ENCODE measurements at regions of chr1 and their contacts with region 1.

Region 1: GRCh38 chr1:157496121-157496526 is 56.2 kb downstream of the FCRL5 start:
- DNase-seq: peak; percentile 23
- ATAC-seq: peak; percentile 97
- H3K4me3 ChIP-seq: no peak overlapping the region
- H3K27ac ChIP-seq: no peak overlapping the region
- H3K4me1 ChIP-seq: no peaks in the 10 kb centered on the region
- H3K27me3 ChIP-seq: no peaks in the 10 kb centered on the region
- CTCF ChIP-seq: peak; percentile 67
- POLR2A ChIP-seq: no peak
- RAD21 ChIP-seq: peak; percentile 48

Region 2: DNA sequence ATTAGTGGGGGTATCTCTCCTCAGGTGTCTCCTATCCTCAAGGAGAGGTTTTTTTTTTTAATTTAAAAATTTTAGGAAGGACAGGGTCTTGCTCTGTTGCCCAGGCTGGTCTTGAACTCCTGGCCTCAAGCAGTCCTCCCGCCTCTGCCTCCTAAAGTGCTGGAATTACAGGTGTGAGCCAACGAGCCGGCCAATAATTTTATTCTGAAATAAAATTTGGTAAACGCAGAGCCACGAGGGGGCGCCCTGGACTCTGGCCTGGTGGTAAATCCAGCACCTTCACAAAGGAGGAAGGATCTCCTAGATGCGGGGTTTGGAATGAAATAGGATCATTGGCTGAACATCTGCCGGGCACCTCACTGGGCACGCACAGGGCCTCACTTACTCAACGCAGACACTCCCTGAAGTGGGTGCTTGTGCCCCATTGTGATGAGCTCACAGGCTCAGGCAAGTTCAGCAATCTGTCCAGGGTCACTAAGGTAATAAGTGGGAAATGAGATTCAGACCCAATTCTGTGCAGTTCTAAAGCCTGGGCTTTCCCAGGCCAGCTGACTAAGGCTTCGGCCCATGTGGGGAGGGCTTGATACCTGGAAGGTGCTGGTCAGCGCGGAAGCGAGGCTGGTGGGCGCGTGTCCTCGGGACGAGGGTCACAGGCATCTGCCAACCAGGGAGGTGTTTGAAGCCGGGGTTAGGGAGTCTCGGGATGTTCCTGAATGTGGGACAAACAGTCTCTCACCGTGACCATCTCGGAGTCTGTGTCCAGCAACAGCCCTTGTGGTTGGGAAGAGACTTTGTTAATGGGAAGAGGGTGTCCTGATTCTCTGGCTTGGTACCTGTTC is 325.2 kb before region 1 on chr1:
- CTCF ChIA-PET with region 1: no interaction called
- POLR2A ChIA-PET with region 1: no interaction called
- dilution Hi-C with region 1: no loop called
- in situ Hi-C with region 1: no loop called
- intact Hi-C with region 1: loop called (anchors 5 kb)
- DNase-seq: no peak
- ATAC-seq: peak; percentile 49; the same call in 1 of the 2 replicates
- H3K4me3 ChIP-seq: no peak overlapping the region
- H3K27ac ChIP-seq: no peak overlapping the region
- H3K4me1 ChIP-seq: no peaks in the 10 kb centered on the region
- H3K27me3 ChIP-seq: peaks cover 39% of the 10 kb centered on the region
- CTCF ChIP-seq: peak; percentile 48
- POLR2A ChIP-seq: no peak
- RAD21 ChIP-seq: no peak

Region 3: DNA sequence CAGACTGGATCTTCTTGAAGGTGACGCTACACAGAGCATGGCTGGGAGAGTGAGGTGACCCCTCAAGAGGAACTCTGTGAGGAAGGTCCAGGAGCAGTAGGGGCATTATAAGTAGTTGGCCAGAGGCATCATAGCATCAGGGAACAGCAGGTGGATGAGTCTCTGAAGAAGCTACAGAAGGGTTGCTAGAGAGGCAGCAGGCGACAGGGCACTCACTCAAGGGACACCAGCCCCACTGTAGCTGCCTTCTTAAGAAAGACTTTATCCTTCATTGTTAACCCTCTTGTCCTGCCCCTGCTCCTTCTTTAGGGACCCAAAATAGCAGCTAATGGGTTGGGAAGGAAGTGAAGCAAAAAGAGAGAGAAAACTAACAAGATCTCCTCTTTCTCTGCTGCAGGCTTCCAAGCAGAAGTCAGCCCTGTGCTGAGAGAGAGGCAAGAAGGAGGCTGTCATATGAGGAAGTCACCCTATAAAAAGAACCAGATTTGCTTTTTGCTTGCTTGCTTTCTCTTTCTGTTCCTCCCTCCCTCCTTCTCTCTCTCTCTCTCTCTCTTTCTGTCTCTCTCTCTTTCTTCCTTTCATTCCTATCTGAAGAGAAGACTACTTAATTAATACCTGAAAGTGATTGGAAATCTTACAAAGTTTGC is 353.2 kb after region 1 on chr1:
- CTCF ChIA-PET with region 1: no interaction called
- POLR2A ChIA-PET with region 1: no interaction called
- dilution Hi-C with region 1: no loop called
- in situ Hi-C with region 1: no loop called
- intact Hi-C with region 1: no loop called
- DNase-seq: no peak
- ATAC-seq: no peak
- H3K4me3 ChIP-seq: no peak overlapping the region
- H3K27ac ChIP-seq: no peak overlapping the region
- H3K4me1 ChIP-seq: no peaks in the 10 kb centered on the region
- H3K27me3 ChIP-seq: no peaks in the 10 kb centered on the region
- CTCF ChIP-seq: no peak
- POLR2A ChIP-seq: no peak
- RAD21 ChIP-seq: no peak